ENCODE measurements at regions of chr16 and their contacts with region 1.

Region 1: DNA sequence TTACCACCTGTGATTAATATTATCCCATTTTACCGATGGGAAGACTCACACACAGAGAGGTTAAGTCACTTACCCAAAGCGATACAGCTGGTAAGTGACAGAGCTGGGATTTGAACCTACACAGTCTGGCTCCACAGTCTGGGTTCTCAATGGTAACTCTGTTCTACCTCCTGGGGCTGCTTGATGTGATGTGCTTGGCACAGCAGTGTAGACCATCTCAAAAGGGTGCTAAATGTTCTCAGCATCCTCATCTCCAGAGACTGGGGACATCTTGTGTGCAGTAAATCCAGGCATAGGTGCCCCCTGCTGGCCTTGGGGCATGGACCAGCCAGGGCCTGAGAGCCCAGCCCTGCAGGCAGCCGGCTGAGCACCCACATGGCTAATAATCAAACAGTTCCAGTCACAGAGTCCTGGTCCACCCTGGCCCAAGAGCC is 15.4 kb upstream of the KATNB1 start:
- DNase-seq: peak; percentile 62
- ATAC-seq: peak; percentile 67

Region 2: GRCh38 chr16:57576429-57576870 is 143.7 kb before region 1 on chr16:
- intact Hi-C with region 1: loop called (anchors 5 kb)
- DNase-seq: peak; percentile 87
- ATAC-seq: peak; percentile 89

Region 3: GRCh38 chr16:57600048-57600835 is 119.9 kb before region 1 on chr16:
- intact Hi-C with region 1: loop called (anchors 10 kb)
- DNase-seq: peak; percentile 60
- ATAC-seq: peak; percentile 81

Measured in Right ventricle myocardium superior (tissue), 1 donor.